ENCODE measurements at regions of chr15 and their contacts with region 1.

Region 1: DNA sequence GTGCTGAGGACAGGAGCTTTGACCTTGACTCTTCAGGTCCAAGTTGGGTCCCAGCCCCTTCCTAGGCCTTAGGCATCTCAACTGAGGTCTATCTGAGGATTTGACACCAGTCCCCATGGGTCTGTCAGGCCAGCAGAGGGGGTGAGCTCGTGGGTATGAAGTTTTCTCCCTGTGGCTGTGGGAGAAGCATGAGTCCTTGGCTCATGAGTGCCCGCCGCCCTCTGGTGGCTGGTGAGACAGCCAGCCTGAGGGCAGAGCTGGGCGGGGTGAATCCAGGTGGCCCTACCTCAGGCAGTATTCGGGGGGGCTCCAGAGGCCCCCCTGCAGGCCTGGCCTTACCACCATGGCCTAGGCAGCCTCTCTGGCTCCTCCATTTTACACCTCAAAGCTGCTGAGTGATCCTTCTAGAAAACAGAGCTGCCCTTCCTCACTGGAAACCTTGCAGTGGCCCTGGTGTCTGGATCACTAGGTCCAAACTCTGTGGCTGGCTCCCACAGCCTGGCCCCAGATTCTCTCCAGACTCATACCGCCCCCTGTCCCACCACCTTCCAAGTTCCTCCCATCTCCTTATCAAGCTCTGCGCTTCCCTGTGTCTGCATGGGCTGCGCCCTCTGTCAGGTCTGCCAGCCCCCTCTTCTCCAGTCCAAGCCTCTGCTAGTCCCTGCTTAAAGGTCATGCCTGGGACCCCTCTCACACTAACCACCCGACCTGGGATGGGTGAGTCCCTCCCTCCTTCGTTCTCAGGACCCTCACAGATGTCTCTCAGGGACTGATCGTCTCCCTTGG is 16.1 kb downstream of the SH2D7 start:
- DNase-seq: peak; percentile 83
- ATAC-seq: peak; percentile 97
- H3K4me3 ChIP-seq: no peak overlapping the region
- H3K27ac ChIP-seq: no peak overlapping the region
- H3K4me1 ChIP-seq: peaks cover 2% of the 10 kb centered on the region; the same call in 1 of the 2 replicates
- H3K27me3 ChIP-seq: peaks cover 2% of the 10 kb centered on the region; the same call in 1 of the 2 replicates
- CTCF ChIP-seq: peak; percentile 98
- POLR2A ChIP-seq: peak; percentile 46; the same call in 1 of the 2 replicates
- RAD21 ChIP-seq: peak; percentile 97

Region 2: DNA sequence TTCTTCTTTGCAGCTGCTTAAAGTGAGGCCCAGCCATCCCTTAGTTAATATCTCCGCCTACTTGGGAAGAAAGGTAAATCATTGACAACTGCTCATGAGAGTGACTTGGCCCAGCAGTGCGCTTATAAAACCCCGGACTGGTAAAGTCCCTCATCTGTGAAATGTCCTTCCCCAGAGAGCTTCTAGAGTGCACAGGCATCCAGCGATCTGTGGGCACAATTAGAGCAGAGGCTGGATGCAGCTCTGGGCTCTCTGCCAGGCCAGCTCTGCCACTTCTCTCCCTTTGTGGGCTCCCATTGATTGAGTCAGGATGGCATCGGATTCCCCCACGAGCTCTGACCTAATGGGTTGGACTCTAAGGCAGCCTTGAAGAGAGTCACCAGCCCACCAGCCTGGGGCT is 256.8 kb before region 1 on chr15:
- CTCF ChIA-PET with region 1: no interaction called
- POLR2A ChIA-PET with region 1: no interaction called
- dilution Hi-C with region 1: no loop called
- in situ Hi-C with region 1: no loop called
- intact Hi-C with region 1: no loop called
- DNase-seq: no peak
- ATAC-seq: no peak
- H3K4me3 ChIP-seq: no peak overlapping the region
- H3K27ac ChIP-seq: no peak overlapping the region
- H3K4me1 ChIP-seq: no peaks in the 10 kb centered on the region
- H3K27me3 ChIP-seq: peaks cover 48% of the 10 kb centered on the region
- CTCF ChIP-seq: no peak
- POLR2A ChIP-seq: no peak
- RAD21 ChIP-seq: no peak

Region 3: DNA sequence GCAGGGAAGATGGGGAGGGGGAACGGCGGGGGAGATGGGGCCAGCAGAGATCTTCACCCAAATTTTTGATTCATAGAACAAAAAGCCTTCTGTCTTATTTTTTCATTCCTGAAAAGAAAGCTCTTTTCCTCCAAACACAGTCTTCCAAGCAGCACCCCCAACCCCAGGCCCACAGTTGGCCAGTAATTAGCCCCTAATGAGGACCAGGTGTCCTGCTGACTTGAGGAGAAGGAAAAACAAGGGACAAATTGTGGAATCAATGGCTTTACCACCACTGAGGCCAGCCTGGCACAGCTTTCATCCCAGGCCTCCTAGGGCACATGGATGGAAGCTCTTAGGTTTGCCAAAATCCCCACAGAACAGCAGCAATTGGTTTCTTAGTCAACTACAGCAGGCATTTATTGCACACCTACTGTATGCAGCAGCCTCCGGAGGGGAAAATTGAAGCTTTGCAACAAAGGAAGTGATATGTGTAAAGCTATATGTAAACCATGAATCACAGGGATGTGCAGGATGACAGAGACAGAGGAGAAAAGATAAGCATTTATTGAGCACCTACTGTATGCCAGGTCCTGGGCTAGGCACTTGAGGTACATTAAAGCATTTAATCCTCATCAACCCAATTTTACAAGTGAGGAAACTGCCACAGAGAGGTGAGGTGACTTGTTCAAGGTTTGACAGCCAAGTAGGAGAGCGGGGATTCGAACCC is 230.5 kb before region 1 on chr15:
- CTCF ChIA-PET with region 1: no interaction called
- POLR2A ChIA-PET with region 1: no interaction called
- dilution Hi-C with region 1: no loop called
- in situ Hi-C with region 1: no loop called
- intact Hi-C with region 1: no loop called
- DNase-seq: no peak
- ATAC-seq: no peak
- H3K4me3 ChIP-seq: no peak overlapping the region
- H3K27ac ChIP-seq: no peak overlapping the region
- H3K4me1 ChIP-seq: no peaks in the 10 kb centered on the region
- H3K27me3 ChIP-seq: peaks cover 5% of the 10 kb centered on the region
- CTCF ChIP-seq: no peak
- POLR2A ChIP-seq: no peak
- RAD21 ChIP-seq: no peak

Region 4: DNA sequence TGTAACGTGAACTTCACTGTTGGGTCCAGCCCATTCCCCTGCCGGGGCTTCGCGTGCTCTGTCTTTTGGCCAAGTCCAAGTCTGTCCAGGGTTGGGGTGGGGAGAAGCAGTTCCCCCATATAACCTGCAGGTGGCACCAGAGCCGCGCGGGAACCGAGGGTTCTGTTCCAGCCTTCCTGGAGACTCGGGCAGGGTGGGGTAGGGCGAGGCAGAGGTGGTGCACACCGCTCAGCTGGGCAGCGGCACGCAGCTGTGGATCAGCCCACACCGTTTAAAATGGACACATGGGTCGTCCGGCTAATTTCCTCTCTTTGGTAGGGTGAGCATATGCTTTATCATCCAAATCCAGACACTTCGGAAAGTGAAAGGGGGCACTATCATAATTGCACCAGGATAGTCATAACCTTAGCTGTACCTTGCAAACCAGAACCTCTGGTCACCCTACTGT is 149.0 kb before region 1 on chr15:
- CTCF ChIA-PET with region 1: interaction called, 21 read pairs
- POLR2A ChIA-PET with region 1: no interaction called
- dilution Hi-C with region 1: no loop called
- in situ Hi-C with region 1: no loop called
- intact Hi-C with region 1: loop called (anchors 2 kb)
- DNase-seq: peak; percentile 41
- ATAC-seq: peak; percentile 100
- H3K4me3 ChIP-seq: no peak overlapping the region
- H3K27ac ChIP-seq: no peak overlapping the region
- H3K4me1 ChIP-seq: no peaks in the 10 kb centered on the region
- H3K27me3 ChIP-seq: peaks cover 46% of the 10 kb centered on the region
- CTCF ChIP-seq: peak; percentile 90
- POLR2A ChIP-seq: no peak
- RAD21 ChIP-seq: peak; percentile 92

Region 5: GRCh38 chr15:78004919-78005634 is 103.4 kb before region 1 on chr15:
- CTCF ChIA-PET with region 1: interaction called, 5 read pairs
- POLR2A ChIA-PET with region 1: no interaction called
- dilution Hi-C with region 1: no loop called
- in situ Hi-C with region 1: no loop called
- intact Hi-C with region 1: loop called (anchors 2 kb)
- DNase-seq: peak; percentile 95
- ATAC-seq: peak; percentile 86
- H3K4me3 ChIP-seq: no peak overlapping the region
- H3K27ac ChIP-seq: no peak overlapping the region
- H3K4me1 ChIP-seq: peaks cover 18% of the 10 kb centered on the region
- H3K27me3 ChIP-seq: no peaks in the 10 kb centered on the region
- CTCF ChIP-seq: peak; percentile 43
- POLR2A ChIP-seq: no peak
- RAD21 ChIP-seq: peak; percentile 50

Region 6: DNA sequence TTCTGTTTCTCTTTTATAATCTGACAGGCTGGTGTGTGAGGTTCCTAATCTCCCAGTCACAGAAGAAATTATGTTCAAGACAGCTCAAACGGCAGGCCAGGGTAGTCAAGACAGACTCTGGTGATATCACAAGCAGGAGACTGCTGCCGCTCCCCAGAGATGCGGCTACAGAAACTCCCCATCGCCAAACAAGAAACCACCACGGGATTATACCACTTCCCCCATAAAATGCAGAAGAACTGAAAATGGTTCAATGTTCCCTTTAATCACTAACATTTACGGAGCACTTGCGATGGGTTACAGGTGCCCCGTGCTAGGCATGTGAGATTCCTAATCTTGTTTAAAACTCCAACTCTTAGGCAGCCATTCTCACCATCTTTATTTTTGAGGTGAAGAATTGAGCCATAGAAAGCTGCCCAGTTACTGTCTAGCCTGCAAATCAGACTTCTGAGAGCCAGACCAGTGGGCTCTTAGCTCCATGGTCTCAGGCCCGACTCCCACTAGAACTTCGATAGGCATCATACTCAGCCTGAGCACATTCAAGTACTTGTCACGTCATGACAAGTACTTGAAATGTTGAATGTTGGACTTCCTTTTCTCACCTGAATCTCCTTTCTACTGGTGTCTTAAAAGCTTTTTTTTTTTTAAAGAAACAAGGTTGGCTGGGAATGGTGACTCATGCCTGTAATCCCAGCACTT is 89.4 kb before region 1 on chr15:
- CTCF ChIA-PET with region 1: no interaction called
- POLR2A ChIA-PET with region 1: no interaction called
- dilution Hi-C with region 1: no loop called
- in situ Hi-C with region 1: no loop called
- intact Hi-C with region 1: no loop called
- DNase-seq: no peak
- ATAC-seq: no peak
- H3K4me3 ChIP-seq: no peak overlapping the region
- H3K27ac ChIP-seq: no peak overlapping the region
- H3K4me1 ChIP-seq: peaks cover 6% of the 10 kb centered on the region; the same call in 1 of the 2 replicates
- H3K27me3 ChIP-seq: no peaks in the 10 kb centered on the region
- CTCF ChIP-seq: no peak
- POLR2A ChIP-seq: no peak
- RAD21 ChIP-seq: no peak

Region 7: GRCh38 chr15:78195735-78196201 is 87.3 kb after region 1 on chr15:
- CTCF ChIA-PET with region 1: interaction called, 3 read pairs
- POLR2A ChIA-PET with region 1: no interaction called
- dilution Hi-C with region 1: no loop called
- in situ Hi-C with region 1: no loop called
- intact Hi-C with region 1: loop called (anchors 1 kb)
- DNase-seq: no peak
- ATAC-seq: peak; percentile 46; the same call in 1 of the 2 replicates
- H3K4me3 ChIP-seq: no peak overlapping the region
- H3K27ac ChIP-seq: no peak overlapping the region
- H3K4me1 ChIP-seq: no peaks in the 10 kb centered on the region
- H3K27me3 ChIP-seq: peaks cover 35% of the 10 kb centered on the region
- CTCF ChIP-seq: peak; percentile 47
- POLR2A ChIP-seq: no peak
- RAD21 ChIP-seq: peak; percentile 53

Region 8: GRCh38 chr15:78241007-78241406 is 132.5 kb after region 1 on chr15:
- CTCF ChIA-PET with region 1: interaction called, 9 read pairs
- POLR2A ChIA-PET with region 1: no interaction called
- dilution Hi-C with region 1: no loop called
- in situ Hi-C with region 1: loop called (anchors 10 kb)
- intact Hi-C with region 1: loop called (anchors 1 kb)
- DNase-seq: peak; percentile 59
- ATAC-seq: peak; percentile 99
- H3K4me3 ChIP-seq: no peak overlapping the region
- H3K27ac ChIP-seq: no peak overlapping the region
- H3K4me1 ChIP-seq: no peaks in the 10 kb centered on the region
- H3K27me3 ChIP-seq: peaks cover 20% of the 10 kb centered on the region
- CTCF ChIP-seq: peak; percentile 92
- POLR2A ChIP-seq: 0 out of 2 replicates have a peak, but pooled peaks have one; percentile 32
- RAD21 ChIP-seq: peak; percentile 91

Region 9: DNA sequence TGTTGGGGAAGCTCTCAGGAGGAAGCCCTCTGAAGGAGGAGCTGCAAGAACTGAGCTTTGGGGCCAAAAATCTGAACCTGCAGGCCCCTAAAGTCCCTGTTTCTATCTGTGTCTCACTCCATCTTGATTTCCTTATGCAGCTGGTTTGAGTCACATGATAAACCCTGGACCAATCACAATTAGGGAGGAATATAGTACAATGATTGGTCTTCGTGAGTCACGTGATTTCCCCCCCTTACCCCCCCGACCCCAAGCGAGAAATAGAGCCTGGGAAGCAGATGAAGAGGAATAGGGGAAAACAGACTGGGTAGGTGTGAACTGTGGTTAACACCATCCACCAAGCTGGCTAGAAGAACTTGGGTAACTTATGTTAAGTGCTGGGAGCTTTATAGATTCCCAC is 244.6 kb after region 1 on chr15:
- CTCF ChIA-PET with region 1: no interaction called
- POLR2A ChIA-PET with region 1: no interaction called
- dilution Hi-C with region 1: no loop called
- in situ Hi-C with region 1: no loop called
- intact Hi-C with region 1: no loop called
- DNase-seq: peak; percentile 5
- ATAC-seq: no peak
- H3K4me3 ChIP-seq: no peak overlapping the region
- H3K27ac ChIP-seq: no peak overlapping the region
- H3K4me1 ChIP-seq: no peaks in the 10 kb centered on the region
- H3K27me3 ChIP-seq: peaks cover 18% of the 10 kb centered on the region
- CTCF ChIP-seq: no peak
- POLR2A ChIP-seq: no peak
- RAD21 ChIP-seq: no peak